PC-3 (cell line): ENCODE measurements at regions of chr1 and their contacts with region 1.

Region 1: DNA sequence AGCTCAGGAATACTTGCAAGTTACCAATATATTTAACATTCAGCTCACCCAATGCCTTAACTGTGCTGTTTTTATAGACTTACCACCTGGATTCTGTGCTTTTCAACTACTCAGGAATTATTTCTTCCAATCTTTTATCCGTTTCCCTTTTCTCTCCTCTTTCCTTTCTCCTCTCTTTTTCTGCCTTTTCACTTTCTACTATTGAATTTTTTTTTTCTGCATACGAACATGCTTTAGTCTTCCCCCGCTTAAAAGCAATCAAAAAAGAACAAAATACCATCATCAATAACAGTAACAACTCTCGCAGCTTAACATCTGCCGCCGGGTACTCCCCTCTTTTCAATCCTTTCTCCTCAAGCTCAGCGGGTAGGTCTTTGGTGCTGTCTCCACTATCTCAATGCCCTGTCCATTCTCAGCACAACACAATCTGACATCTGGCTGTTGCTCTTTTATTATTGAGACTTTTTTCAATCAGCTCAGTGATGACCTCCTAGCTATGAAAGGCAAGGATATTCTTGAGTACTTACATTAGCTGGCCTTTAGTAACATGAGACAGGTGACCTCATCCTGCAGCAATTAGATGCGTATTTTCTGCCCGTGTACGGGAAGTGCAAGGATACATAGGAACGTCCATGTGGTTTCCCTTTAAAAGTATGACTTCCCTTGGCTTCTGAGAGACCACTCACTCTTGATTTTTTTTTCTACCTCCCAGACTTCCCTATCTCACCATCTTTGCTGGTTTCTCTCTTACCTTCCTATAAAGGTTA is 40.2 kb upstream of the SIPA1L2 start:
- DNase-seq: no peak
- ATAC-seq: no peak
- H3K4me3 ChIP-seq: no peak overlapping the region
- H3K27ac ChIP-seq: no peak overlapping the region
- H3K4me1 ChIP-seq: peaks cover 12% of the 10 kb centered on the region
- H3K27me3 ChIP-seq: no peaks in the 10 kb centered on the region
- CTCF ChIP-seq: no peak

Region 2: GRCh38 chr1:232767305-232768074 is 97.3 kb after region 1 on chr1:
- CTCF ChIA-PET with region 1: no interaction called
- POLR2A ChIA-PET with region 1: no interaction called
- intact Hi-C with region 1: loop called (anchors 10 kb)
- DNase-seq: peak; percentile 94
- ATAC-seq: peak; percentile 83
- H3K4me3 ChIP-seq: no peak overlapping the region
- H3K27ac ChIP-seq: peak overlapping the region; percentile 22
- H3K4me1 ChIP-seq: peaks cover 15% of the 10 kb centered on the region
- H3K27me3 ChIP-seq: no peaks in the 10 kb centered on the region
- CTCF ChIP-seq: no peak